ENCODE measurements at regions of chr2 and their contacts with region 1.

Region 1: DNA sequence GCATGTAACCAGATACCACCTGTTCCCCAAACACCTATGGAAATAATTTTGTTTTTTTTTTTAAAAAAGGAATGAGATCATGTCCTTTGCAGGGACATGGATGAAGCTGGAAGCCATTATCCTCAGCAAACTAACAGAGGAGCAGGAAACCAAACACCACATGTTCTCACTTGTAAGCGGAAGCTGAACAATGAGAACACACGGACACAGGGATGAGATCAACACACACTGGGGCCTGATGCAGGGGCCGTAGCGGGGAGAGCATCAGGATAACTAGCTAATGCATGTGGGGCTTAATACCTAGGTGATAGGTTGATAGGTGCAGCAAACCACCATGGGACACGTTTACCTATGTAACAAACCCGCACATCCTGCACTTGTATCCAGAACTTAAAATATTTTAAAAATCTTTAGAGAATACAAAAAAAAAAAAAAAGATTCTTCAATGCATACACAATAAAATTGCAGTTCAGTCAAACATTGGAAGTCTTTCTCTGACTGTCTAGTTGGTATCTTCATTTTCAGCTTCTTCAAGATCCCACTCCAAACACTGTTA is 11.6 kb upstream of the CASP10 start:
- DNase-seq: no peak
- H3K4me3 ChIP-seq: no peak overlapping the region
- H3K27ac ChIP-seq: no peak overlapping the region
- H3K4me1 ChIP-seq: no peaks in the 10 kb centered on the region
- H3K27me3 ChIP-seq: no peaks in the 10 kb centered on the region
- CTCF ChIP-seq: no peak

Region 2: DNA sequence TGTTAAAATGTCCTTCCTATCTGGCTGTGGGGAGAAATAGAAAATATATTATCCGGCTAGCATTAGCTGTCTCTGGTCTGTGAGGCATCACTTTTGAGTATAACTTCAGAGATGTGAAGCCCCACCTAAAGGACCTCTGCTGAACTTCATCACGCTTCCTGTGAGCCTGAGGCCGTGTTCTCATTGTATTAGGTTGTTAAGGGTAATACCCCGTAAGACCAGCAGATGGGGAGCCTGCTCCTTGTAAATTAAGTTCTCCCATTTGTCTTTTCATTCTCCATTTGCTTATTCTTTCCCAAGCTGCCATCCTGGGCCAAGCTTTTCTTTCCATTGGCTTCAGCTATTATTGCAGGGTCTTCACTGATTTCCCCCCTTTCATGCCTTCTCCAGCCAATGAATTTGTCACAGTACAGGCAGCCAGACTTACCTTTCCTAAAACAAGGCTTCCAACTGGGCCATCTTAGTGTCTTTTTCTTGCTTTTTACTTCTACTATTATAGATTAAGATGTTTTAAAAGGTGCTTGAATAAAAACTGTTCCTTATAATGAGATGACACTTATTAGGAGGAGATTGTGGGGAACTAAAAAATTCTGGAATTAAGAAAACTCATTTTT is 269.8 kb before region 1 on chr2:
- intact Hi-C with region 1: loop called (anchors 10 kb)
- DNase-seq: peak in 1 of 2 donors; percentile 77
- H3K4me3 ChIP-seq: no peak overlapping the region
- H3K27ac ChIP-seq: no peak overlapping the region
- H3K4me1 ChIP-seq: no peaks in the 10 kb centered on the region
- H3K27me3 ChIP-seq: no peaks in the 10 kb centered on the region
- CTCF ChIP-seq: peak; percentile 63 to 70

Region 3: GRCh38 chr2:201182650-201183364 is 11.5 kb after region 1 on chr2 and contains the start of gene CASP10:
- intact Hi-C with region 1: no loop called
- DNase-seq: no peak
- H3K4me3 ChIP-seq: peak within 1 kb of the TSS; percentile 31 to 44
- H3K27ac ChIP-seq: no peak within 1 kb of the TSS
- H3K4me1 ChIP-seq: no peaks in the 10 kb centered on the region
- H3K27me3 ChIP-seq: peaks cover 0 to 3% of the 10 kb centered on the region in 2 donors
- CTCF ChIP-seq: peak in 1 of 2 experiments; percentile 11

Measured in tibial artery (tissue), 4 donors.